PC-9 (cell line): ENCODE measurements at regions of chr1 and their contacts with region 1.

Region 1: GRCh38 chr1:208117826-208118225 is 126.4 kb downstream of the PLXNA2 start:
- DNase-seq: no peak
- H3K4me3 ChIP-seq: no peak overlapping the region
- H3K27ac ChIP-seq: no peak overlapping the region
- H3K4me1 ChIP-seq: peaks cover 33% of the 10 kb centered on the region
- H3K27me3 ChIP-seq: no peaks in the 10 kb centered on the region
- CTCF ChIP-seq: no peak

Region 2: GRCh38 chr1:207762622-207763021 is 355.2 kb before region 1 on chr1:
- CTCF ChIA-PET with region 1: no interaction called
- POLR2A ChIA-PET with region 1: no interaction called
- intact Hi-C with region 1: no loop called
- DNase-seq: no peak
- H3K4me3 ChIP-seq: no peak overlapping the region
- H3K27ac ChIP-seq: no peak overlapping the region
- H3K4me1 ChIP-seq: no peaks in the 10 kb centered on the region
- H3K27me3 ChIP-seq: no peaks in the 10 kb centered on the region
- CTCF ChIP-seq: no peak

Region 3: DNA sequence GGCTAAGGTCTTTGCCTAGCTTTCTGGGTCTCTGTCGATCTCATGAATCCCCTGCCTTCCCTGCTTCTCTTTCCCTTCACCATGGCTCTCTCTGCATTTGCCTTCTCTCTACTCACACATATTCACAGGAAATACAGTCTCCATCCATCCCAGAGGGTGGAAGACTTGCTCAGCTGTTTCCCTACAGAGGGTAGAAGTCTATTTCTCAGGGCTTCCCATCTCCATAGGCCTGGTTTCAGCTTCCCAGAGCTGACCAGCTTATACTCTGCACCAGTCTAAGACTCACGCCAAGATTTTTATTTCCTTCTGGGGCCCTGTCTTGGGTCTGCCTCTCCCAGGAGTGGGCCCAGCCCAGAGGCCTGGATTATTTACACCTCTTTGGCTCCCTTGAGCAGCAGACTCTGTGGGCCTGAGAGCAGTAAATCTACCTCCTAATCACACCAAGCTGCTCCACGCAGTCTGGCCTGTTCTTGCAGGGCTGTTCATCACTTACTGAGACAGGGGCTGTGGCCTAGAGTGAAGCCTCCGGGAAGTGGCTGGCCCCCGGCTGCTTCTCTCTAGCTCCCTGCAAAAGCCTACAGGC is 23.9 kb after region 1 on chr1:
- CTCF ChIA-PET with region 1: no interaction called
- POLR2A ChIA-PET with region 1: no interaction called
- intact Hi-C with region 1: no loop called
- DNase-seq: no peak
- H3K4me3 ChIP-seq: no peak overlapping the region
- H3K27ac ChIP-seq: no peak overlapping the region
- H3K4me1 ChIP-seq: peaks cover 10% of the 10 kb centered on the region
- H3K27me3 ChIP-seq: no peaks in the 10 kb centered on the region
- CTCF ChIP-seq: no peak

Region 4: DNA sequence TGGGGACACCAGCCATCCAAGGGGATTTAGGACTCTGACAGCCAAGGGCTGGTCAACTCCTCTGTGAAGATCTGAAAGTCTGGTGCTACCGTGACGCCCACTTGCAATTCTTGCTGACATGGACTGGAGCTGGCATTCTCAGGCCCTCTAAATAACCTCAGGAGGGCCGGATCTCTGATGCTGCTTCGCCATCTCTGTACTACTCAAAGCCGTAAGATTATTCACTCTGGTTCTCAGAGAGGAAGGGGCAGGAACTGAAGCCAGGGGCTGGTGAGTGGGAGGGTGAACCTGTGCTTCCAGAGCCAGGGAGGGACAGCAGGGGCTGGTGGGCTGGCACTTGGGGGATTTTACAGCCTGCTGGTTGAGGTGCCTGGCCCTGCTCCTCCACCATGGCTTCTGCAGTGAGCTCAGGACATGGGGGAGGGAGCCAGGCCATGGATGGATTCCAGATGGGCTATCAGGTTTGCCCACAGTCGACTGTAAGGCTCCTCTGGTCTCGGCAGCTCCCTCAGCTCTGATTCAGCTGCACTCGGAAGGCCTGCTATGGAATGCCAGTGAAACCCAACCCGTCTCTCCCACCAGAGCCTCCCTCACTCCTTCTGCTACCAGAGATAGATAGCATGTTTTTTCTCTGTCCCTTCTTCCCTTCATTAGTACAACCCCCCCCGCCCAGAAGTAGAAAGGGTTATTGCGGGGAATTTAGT is 41.9 kb after region 1 on chr1:
- CTCF ChIA-PET with region 1: no interaction called
- POLR2A ChIA-PET with region 1: interaction called, 20 read pairs
- intact Hi-C with region 1: no loop called
- DNase-seq: no peak
- H3K4me3 ChIP-seq: no peak overlapping the region
- H3K27ac ChIP-seq: no peak overlapping the region
- H3K4me1 ChIP-seq: peaks cover 16% of the 10 kb centered on the region
- H3K27me3 ChIP-seq: no peaks in the 10 kb centered on the region
- CTCF ChIP-seq: no peak